Prostate gland (tissue), 2 donors: ENCODE measurements at regions of chr10 and their contacts with region 1.

Region 1: GRCh38 chr10:10792681-10793080 is 225.0 kb upstream of the CELF2 start:
- DNase-seq: no peak
- H3K4me3 ChIP-seq: no peak overlapping the region
- H3K27ac ChIP-seq: no peak overlapping the region
- H3K4me1 ChIP-seq: no peaks in the 10 kb centered on the region
- H3K27me3 ChIP-seq: no peaks in the 10 kb centered on the region
- CTCF ChIP-seq: no peak
- POLR2A ChIP-seq: no peak

Region 2: DNA sequence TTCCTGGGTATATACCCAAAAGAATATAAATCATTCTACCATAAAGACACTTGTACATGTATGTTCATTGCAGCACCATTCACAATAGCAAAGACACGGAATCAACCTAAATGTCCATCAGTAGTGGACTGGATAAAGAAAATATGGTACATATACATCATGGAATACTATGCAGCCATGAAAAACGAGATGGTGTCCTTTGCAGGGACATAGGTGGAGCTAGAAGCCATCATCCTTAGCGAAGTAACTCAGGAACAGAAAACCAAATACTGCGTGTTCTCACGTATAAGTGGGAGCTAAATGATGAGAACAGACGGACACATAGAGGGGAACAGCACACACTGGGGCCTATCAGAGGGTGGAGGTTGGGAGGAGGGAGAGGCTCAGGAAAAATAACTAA is 41.3 kb after region 1 on chr10:
- intact Hi-C with region 1: no loop called
- DNase-seq: no peak
- H3K4me3 ChIP-seq: no peak overlapping the region
- H3K27ac ChIP-seq: no peak overlapping the region
- H3K4me1 ChIP-seq: no peaks in the 10 kb centered on the region
- H3K27me3 ChIP-seq: no peaks in the 10 kb centered on the region
- CTCF ChIP-seq: no peak
- POLR2A ChIP-seq: no peak

Region 3: GRCh38 chr10:10911471-10911921 is 118.8 kb after region 1 on chr10:
- intact Hi-C with region 1: loop called (anchors 10 kb)
- DNase-seq: peak; percentile 66
- H3K4me3 ChIP-seq: peak overlapping the region; percentile 4 to 14
- H3K27ac ChIP-seq: peak overlapping the region; percentile 19 to 39
- H3K4me1 ChIP-seq: no peaks in the 10 kb centered on the region
- H3K27me3 ChIP-seq: no peaks in the 10 kb centered on the region
- CTCF ChIP-seq: no peak
- POLR2A ChIP-seq: no peak

Region 4: GRCh38 chr10:11260170-11260569 is 467.5 kb after region 1 on chr10:
- intact Hi-C with region 1: loop called (anchors 10 kb)
- DNase-seq: no peak
- H3K4me3 ChIP-seq: no peak overlapping the region
- H3K27ac ChIP-seq: no peak overlapping the region
- H3K4me1 ChIP-seq: no peaks in the 10 kb centered on the region
- H3K27me3 ChIP-seq: no peaks in the 10 kb centered on the region
- CTCF ChIP-seq: no peak
- POLR2A ChIP-seq: no peak